Sigmoid colon (tissue), 7 donors: ENCODE measurements at regions of chr11 and their contacts with region 1.

Region 1: GRCh38 chr11:506238-506994 is 626 bp downstream of the RNH1 start:
- DNase-seq: peak; percentile 99
- H3K4me3 ChIP-seq: peak overlapping the region; percentile 70 to 94 (median 92)
- H3K27ac ChIP-seq: peak overlapping the region; percentile 97 to 100 (median 99)
- H3K4me1 ChIP-seq: peaks cover 0 to 54% (median 48%) of the 10 kb centered on the region in 4 donors
- H3K27me3 ChIP-seq: no peaks in the 10 kb centered on the region
- CTCF ChIP-seq: no peak
- EP300 ChIP-seq: peak in 2 of 4 donors; percentile 77 to 82
- POLR2A ChIP-seq: peak in 1 of 2 donors; percentile 59

Region 2: DNA sequence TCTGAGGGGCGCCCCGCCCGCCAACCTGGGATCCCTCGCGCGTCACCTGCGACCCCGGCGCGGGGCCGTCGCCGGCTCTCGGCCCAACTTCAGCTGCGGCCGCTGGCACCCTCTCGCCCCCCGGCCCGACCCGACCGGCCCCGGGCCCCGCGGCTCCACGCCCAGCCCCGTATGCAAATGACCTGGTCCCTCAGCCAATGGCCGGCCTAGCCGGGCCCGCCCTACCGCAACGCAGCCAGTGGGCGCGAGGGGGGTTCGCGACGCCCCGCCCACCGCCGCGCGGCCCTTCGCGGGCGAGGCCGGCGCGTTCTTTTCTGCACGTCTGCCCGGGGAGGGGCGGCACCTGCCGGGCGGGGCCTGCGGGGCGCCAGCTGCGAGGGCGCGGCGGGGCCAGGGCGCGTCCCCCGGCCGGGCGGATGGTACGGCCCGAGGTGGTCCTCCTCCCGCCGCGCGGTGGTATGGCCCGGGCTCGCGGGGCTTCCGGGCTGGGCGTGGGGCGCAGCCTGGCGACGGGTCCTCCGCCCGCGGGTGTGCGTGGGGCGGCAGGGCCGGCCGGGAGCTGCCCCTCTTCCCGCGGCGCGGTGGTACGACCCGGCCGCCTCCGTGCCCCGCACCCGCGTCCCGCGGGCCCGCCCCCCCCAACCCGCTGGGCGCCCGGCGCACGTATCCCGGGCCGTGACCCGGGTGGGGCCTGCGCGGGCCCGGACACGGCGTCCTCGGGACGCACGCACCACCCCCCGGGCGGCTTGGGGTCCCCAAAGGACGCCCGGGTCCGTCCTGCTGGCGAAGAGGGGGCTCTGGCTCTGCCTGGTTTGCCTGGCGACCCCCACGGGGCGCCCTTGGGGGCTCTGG is 62.1 kb after region 1 on chr11:
- intact Hi-C with region 1: loop called (anchors 2 kb)
- DNase-seq: peak; percentile 96
- H3K4me3 ChIP-seq: peak overlapping the region; percentile 56 to 78 (median 62)
- H3K27ac ChIP-seq: peak overlapping the region; percentile 68 to 87 (median 76)
- H3K4me1 ChIP-seq: peaks cover 0 to 16% (median 14%) of the 10 kb centered on the region in 4 donors
- H3K27me3 ChIP-seq: no peaks in the 10 kb centered on the region
- CTCF ChIP-seq: no peak
- EP300 ChIP-seq: no peak
- POLR2A ChIP-seq: no peak